Posterior vena cava (tissue), 2 donors: ENCODE measurements at regions of chr4 and their contacts with region 1.

Region 1: GRCh38 chr4:15805583-15806517 is 27.7 kb downstream of the CD38 start:
- DNase-seq: no peak

Region 2: DNA sequence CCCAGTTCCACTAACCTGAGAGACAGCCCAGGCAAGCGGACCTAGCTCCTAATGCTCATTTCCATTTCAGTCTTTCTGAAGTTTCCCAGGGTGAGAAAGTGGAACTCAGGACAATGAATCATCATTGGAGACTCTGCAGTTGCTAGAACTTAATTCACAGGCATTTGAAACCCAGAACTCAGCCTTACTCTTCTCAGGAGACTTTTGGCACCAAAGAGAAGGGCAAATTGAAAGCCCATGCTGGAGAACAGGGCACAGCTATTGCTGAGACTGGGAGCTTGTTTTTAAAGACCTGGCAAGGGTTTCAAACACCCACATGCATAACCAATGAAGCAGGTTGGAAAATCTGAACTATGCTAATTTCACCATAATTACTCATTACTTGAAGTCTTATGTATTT is 67.0 kb before region 1 on chr4:
- intact Hi-C with region 1: no loop called
- DNase-seq: no peak

Region 3: DNA sequence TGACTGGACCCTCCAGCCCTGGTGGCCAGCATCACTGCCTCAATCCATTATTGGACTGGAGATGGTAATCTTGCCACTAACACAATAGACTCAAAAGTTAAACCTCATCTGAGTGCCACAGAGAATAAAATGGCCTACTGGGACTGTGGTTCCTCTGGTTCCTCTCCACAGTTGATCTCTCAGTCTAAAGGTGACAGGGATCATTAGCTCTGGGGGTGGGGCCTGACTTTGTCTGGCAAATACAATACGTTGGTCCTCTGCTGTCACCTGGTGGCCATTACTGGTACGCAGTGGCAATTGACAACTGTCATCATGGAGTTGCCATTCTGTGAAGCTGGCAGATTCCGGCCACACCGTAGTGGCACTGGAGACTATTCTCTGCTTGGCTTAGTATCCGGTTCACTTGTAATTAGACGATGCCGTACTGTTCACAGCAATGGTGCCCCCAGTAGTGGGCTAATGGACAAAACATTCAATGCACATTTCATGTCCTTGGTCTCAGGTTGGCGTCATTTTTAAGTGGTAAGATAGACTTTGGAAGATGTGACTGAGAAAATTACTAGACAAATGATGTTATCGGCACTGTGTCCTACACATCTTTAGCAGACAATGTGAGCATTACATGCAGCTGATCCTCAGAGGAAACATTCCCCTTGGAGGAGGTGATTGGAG is 150.5 kb after region 1 on chr4:
- intact Hi-C with region 1: loop called (anchors 5 to 10 kb)
- DNase-seq: peak; percentile 89

Region 4: DNA sequence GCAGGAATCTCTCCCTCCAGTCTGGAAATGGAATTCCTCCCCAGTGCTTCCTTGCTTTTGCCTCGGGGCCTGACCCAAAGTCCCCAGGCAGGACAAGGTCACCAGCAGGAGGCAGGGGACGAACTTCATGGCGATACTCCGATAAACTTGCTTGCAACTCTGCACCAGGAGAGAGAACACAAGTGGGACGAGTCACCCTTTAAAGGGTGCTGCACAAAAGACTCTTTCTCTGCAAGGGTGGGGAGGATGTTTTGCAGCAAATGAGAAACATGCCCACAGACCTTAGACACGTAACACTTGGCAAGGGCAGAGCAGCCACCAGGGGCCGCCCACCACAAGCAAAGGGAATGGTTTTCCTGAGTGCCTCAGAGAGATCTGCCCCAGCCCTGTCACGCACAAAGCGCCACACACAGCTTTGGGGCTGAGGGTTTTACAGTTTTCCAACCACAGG is 157.2 kb after region 1 on chr4 and contains the start of gene FGFBP2:
- intact Hi-C with region 1: loop called (anchors 5 to 10 kb)
- DNase-seq: no peak
- total RNA-seq, gene FGFBP2: 0.52 to 1.8 TPM